Tibial artery (tissue), 4 donors: ENCODE measurements at regions of chr19 and their contacts with region 1.

Region 1: GRCh38 chr19:19865739-19866481 is at the start of gene ZNF253:
- DNase-seq: peak; percentile 99
- H3K4me3 ChIP-seq: peak within 1 kb of the TSS; percentile 70 to 88
- H3K27ac ChIP-seq: peak within 1 kb of the TSS; percentile 92 to 94
- H3K4me1 ChIP-seq: peaks cover 0 to 39% (median 17%) of the 10 kb centered on the region in 4 donors
- H3K27me3 ChIP-seq: no peaks in the 10 kb centered on the region
- CTCF ChIP-seq: no peak

Region 2: GRCh38 chr19:19776041-19777008 is 89.6 kb before region 1 on chr19:
- intact Hi-C with region 1: no loop called
- DNase-seq: peak; percentile 99
- H3K4me3 ChIP-seq: peak overlapping the region; percentile 64 to 77
- H3K27ac ChIP-seq: peak overlapping the region; percentile 70 to 76
- H3K4me1 ChIP-seq: peaks cover 0 to 22% (median 15%) of the 10 kb centered on the region in 4 donors
- H3K27me3 ChIP-seq: no peaks in the 10 kb centered on the region
- CTCF ChIP-seq: no peak

Region 3: GRCh38 chr19:19821366-19821951 is 44.5 kb before region 1 on chr19 and contains the start of gene ZNF506:
- intact Hi-C with region 1: loop called (anchors 5 kb)
- DNase-seq: peak; percentile 99 to 100
- H3K4me3 ChIP-seq: peak within 1 kb of the TSS; percentile 67 to 70
- H3K27ac ChIP-seq: peak within 1 kb of the TSS; percentile 91 to 95
- H3K4me1 ChIP-seq: peaks cover 0 to 42% (median 16%) of the 10 kb centered on the region in 4 donors
- H3K27me3 ChIP-seq: no peaks in the 10 kb centered on the region
- CTCF ChIP-seq: no peak

Region 4: GRCh38 chr19:19900729-19901444 is 35.0 kb after region 1 on chr19 and contains the start of gene ZNF93:
- intact Hi-C with region 1: loop called (anchors 5 kb)
- DNase-seq: peak; percentile 97
- H3K4me3 ChIP-seq: peak within 1 kb of the TSS; percentile 74 to 76
- H3K27ac ChIP-seq: peak within 1 kb of the TSS; percentile 71 to 87
- H3K4me1 ChIP-seq: peaks cover 0 to 11% (median 0%) of the 10 kb centered on the region in 4 donors
- H3K27me3 ChIP-seq: no peaks in the 10 kb centered on the region
- CTCF ChIP-seq: no peak